ENCODE measurements at regions of chr7 and their contacts with region 1.

Region 1: DNA sequence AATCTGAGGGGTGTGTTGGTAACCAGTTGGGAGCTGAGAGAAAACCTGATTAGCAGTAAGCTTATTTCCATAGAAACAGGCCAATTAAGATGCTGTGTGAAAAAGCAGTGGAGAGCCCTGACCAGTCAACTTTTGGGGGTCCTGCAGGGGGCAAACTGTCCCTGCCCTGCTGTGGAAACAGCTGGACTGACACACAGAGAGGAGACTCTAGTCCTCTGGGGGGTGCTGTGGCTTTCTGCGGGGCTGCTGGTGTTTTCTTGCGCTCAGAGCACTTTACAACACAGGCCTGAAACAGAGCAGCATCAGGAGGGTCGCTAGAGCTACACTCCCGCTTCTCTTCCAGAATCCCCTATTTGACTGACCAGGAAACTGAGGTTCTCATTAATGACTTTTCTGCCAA is 546.9 kb upstream of the GALNT17 start:
- DNase-seq: peak in 2 of 35 experiments; percentile 4 to 27
- ATAC-seq: no peak
- H3K4me3 ChIP-seq: no peak overlapping the region
- H3K4me3 Mint-ChIP-seq: no peak overlapping the region
- H3K27ac ChIP-seq: no peak overlapping the region
- H3K27ac Mint-ChIP-seq: no peak overlapping the region
- H3K4me1 ChIP-seq: no peaks in the 10 kb centered on the region
- H3K4me1 Mint-ChIP-seq: peaks cover 0 to 5% (median 0%) of the 10 kb centered on the region in 3 donors
- H3K27me3 ChIP-seq: no peaks in the 10 kb centered on the region
- H3K27me3 Mint-ChIP-seq: no peaks in the 10 kb centered on the region

Region 2: GRCh38 chr7:70040970-70041766 is 543.9 kb before region 1 on chr7:
- CTCF ChIA-PET with region 1: interaction called in 1 of 2 experiments, 11 read pairs
- POLR2A ChIA-PET with region 1: no interaction called
- DNase-seq: peak in 1 of 35 experiments; percentile 6
- ATAC-seq: no peak
- H3K4me3 ChIP-seq: no peak overlapping the region
- H3K4me3 Mint-ChIP-seq: no peak overlapping the region
- H3K27ac ChIP-seq: no peak overlapping the region
- H3K27ac Mint-ChIP-seq: no peak overlapping the region
- H3K4me1 ChIP-seq: no peaks in the 10 kb centered on the region
- H3K4me1 Mint-ChIP-seq: no peaks in the 10 kb centered on the region
- H3K27me3 ChIP-seq: no peaks in the 10 kb centered on the region
- H3K27me3 Mint-ChIP-seq: no peaks in the 10 kb centered on the region